Activated CD8-positive, alpha-beta T cell treated with anti-CD3 and anti-CD28 coated beads for 36 hours (primary cell): ENCODE measurements at regions of chr15 and their contacts with region 1.

Region 1: GRCh38 chr15:92831655-92832328 is 68.3 kb upstream of the CHD2 start:
- DNase-seq: peak; percentile 96
- ATAC-seq: peak; percentile 96
- H3K4me3 Mint-ChIP-seq: peak overlapping the region; percentile 66
- H3K27ac Mint-ChIP-seq: peak overlapping the region; percentile 95
- H3K4me1 Mint-ChIP-seq: peaks cover 43% of the 10 kb centered on the region
- H3K27me3 Mint-ChIP-seq: no peaks in the 10 kb centered on the region
- CTCF ChIP-seq: no peak

Region 2: DNA sequence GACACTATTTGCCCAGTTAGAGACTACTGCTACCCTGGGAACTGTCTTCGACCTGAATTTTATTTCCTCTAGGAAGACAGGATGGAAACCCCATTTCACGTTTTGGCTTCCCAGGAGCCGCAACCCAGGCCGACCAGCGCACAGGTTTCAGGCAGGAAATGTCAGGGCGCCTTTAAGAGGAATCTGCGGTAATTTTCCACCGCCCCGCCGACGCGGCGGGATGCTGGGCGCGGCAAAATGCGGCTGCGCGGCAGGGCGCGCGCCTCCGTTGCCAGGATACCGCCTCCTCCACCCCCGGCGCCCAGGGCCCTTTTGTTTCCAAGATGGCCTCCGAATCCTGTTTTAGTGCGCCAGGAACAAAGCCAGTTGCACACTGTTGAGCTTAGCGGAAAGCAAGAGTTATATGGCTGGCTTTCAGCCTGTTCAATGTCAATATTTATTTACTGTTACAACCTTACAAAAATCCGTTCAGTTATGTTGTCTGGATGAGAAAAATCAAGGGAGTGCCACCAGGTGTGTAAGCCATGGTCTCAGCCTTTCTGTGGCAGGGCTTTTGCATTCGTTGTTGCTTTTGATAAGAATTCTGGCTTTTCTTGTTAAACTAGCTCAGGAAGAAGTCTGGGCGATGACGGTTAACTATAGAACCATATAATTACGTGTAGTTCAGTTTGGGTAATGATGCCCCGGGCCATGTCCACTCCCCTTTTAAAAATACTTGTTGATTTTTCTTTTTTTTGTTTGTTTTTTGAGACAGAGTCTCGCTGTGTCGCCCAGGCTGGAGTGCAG is 11.4 kb before region 1 on chr15:
- CTCF ChIA-PET with region 1: interaction called, 33 read pairs
- POLR2A ChIA-PET with region 1: interaction called, 55 read pairs
- intact Hi-C with region 1: no loop called
- DNase-seq: peak; percentile 88
- ATAC-seq: peak; percentile 75
- H3K4me3 Mint-ChIP-seq: peak overlapping the region; percentile 82
- H3K27ac Mint-ChIP-seq: peak overlapping the region; percentile 94
- H3K4me1 Mint-ChIP-seq: peaks cover 63% of the 10 kb centered on the region
- H3K27me3 Mint-ChIP-seq: no peaks in the 10 kb centered on the region
- CTCF ChIP-seq: no peak

Region 3: GRCh38 chr15:92845126-92845508 is 13.3 kb after region 1 on chr15:
- CTCF ChIA-PET with region 1: interaction called, 3 read pairs
- POLR2A ChIA-PET with region 1: interaction called, 19 read pairs
- intact Hi-C with region 1: loop called (anchors 2 kb)
- DNase-seq: no peak
- ATAC-seq: peak; percentile 28
- H3K4me3 Mint-ChIP-seq: peak overlapping the region; percentile 47
- H3K27ac Mint-ChIP-seq: peak overlapping the region; percentile 91
- H3K4me1 Mint-ChIP-seq: peaks cover 73% of the 10 kb centered on the region
- H3K27me3 Mint-ChIP-seq: no peaks in the 10 kb centered on the region
- CTCF ChIP-seq: no peak